ENCODE measurements at regions of chr1 and their contacts with region 1.

Region 1: GRCh38 chr1:162878000-162878596 is 17.1 kb upstream of the CCDC190 start:
- DNase-seq: peak; percentile 31 to 87
- H3K4me3 ChIP-seq: no peak overlapping the region
- H3K27ac ChIP-seq: no peak overlapping the region
- H3K4me1 ChIP-seq: peaks cover 0 to 3% (median 0%) of the 10 kb centered on the region in 4 experiments; a peak in 2 of 7 replicates
- H3K27me3 ChIP-seq: no peaks in the 10 kb centered on the region
- CTCF ChIP-seq: peak; percentile 45 to 92 (median 86)
- EP300 ChIP-seq: no peak
- POLR2A ChIP-seq: no peak
- RAD21 ChIP-seq: peak; percentile 99

Region 2: GRCh38 chr1:162756523-162756922 is 121.6 kb before region 1 on chr1:
- CTCF ChIA-PET with region 1: no interaction called
- POLR2A ChIA-PET with region 1: no interaction called
- DNase-seq: no peak
- H3K4me3 ChIP-seq: no peak overlapping the region
- H3K27ac ChIP-seq: no peak overlapping the region
- H3K4me1 ChIP-seq: no peaks in the 10 kb centered on the region
- H3K27me3 ChIP-seq: no peaks in the 10 kb centered on the region
- CTCF ChIP-seq: peak in 1 of 3 experiments; percentile 34; a peak in 1 of 4 replicates
- EP300 ChIP-seq: no peak
- POLR2A ChIP-seq: no peak
- RAD21 ChIP-seq: peak; percentile 14 to 28; a peak in 3 of 4 replicates

Region 3: DNA sequence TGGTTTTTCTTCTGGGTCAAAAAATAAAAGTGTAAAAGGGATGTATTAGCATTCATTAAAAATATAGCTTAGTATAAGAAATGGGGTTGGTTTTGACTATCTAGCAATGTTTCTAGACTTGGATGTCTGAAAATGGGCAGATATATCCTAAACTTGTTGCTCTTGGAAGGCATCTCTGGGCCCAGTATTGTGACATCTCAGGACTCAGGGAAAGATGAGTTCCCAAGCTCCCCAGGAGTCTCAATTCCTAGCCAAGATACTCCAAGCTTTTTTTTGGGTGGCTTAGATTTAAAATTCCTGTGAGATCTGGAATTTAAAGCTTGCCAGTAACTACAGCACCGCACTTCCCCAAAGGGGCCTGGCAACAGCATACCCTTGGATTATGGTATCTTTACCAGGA is 99.1 kb before region 1 on chr1:
- CTCF ChIA-PET with region 1: no interaction called
- POLR2A ChIA-PET with region 1: no interaction called
- DNase-seq: no peak
- H3K4me3 ChIP-seq: no peak overlapping the region
- H3K27ac ChIP-seq: no peak overlapping the region
- H3K4me1 ChIP-seq: 0 out of 7 replicates have a peak, but pooled peaks cover 0 to 2% (median 0%) of the 10 kb centered on the region in 4 experiments
- H3K27me3 ChIP-seq: peaks cover 0 to 2% (median 0%) of the 10 kb centered on the region in 4 experiments; a peak in 1 of 7 replicates
- CTCF ChIP-seq: no peak
- EP300 ChIP-seq: no peak
- POLR2A ChIP-seq: no peak
- RAD21 ChIP-seq: no peak

Region 4: GRCh38 chr1:162854245-162854882 is 23.7 kb before region 1 on chr1:
- CTCF ChIA-PET with region 1: interaction called, 14 read pairs
- POLR2A ChIA-PET with region 1: no interaction called
- DNase-seq: no peak
- H3K4me3 ChIP-seq: no peak overlapping the region
- H3K27ac ChIP-seq: no peak overlapping the region
- H3K4me1 ChIP-seq: no peaks in the 10 kb centered on the region
- H3K27me3 ChIP-seq: no peaks in the 10 kb centered on the region
- CTCF ChIP-seq: peak in 2 of 3 experiments; percentile 52 to 69; a peak in 3 of 4 replicates
- EP300 ChIP-seq: no peak
- POLR2A ChIP-seq: no peak
- RAD21 ChIP-seq: peak; percentile 67 to 68

Region 5: GRCh38 chr1:162861101-162861500 is 17.0 kb before region 1 on chr1 and contains the start of gene CCDC190:
- CTCF ChIA-PET with region 1: interaction called, 10 read pairs
- POLR2A ChIA-PET with region 1: no interaction called
- DNase-seq: no peak
- H3K4me3 ChIP-seq: no peak within 1 kb of the TSS
- H3K27ac ChIP-seq: no peak within 1 kb of the TSS
- H3K4me1 ChIP-seq: no peaks in the 10 kb centered on the region
- H3K27me3 ChIP-seq: no peaks in the 10 kb centered on the region
- CTCF ChIP-seq: no peak
- EP300 ChIP-seq: no peak
- POLR2A ChIP-seq: no peak
- RAD21 ChIP-seq: no peak
- total RNA-seq, gene CCDC190: not detected in 2 replicates

Region 6: GRCh38 chr1:162892906-162893611 is 15.0 kb after region 1 on chr1:
- CTCF ChIA-PET with region 1: interaction called, 17 read pairs
- POLR2A ChIA-PET with region 1: no interaction called
- DNase-seq: no peak
- H3K4me3 ChIP-seq: no peak overlapping the region
- H3K27ac ChIP-seq: no peak overlapping the region
- H3K4me1 ChIP-seq: peaks cover 0 to 4% (median 2%) of the 10 kb centered on the region in 4 experiments; a peak in 1 of 7 replicates
- H3K27me3 ChIP-seq: no peaks in the 10 kb centered on the region
- CTCF ChIP-seq: no peak
- EP300 ChIP-seq: no peak
- POLR2A ChIP-seq: no peak
- RAD21 ChIP-seq: no peak

Region 7: GRCh38 chr1:163174524-163175437 is 296.7 kb after region 1 on chr1:
- CTCF ChIA-PET with region 1: interaction called, 17 read pairs
- POLR2A ChIA-PET with region 1: no interaction called
- DNase-seq: peak; percentile 19 to 77
- H3K4me3 ChIP-seq: no peak overlapping the region
- H3K27ac ChIP-seq: no peak overlapping the region
- H3K4me1 ChIP-seq: no peaks in the 10 kb centered on the region; a peak in 1 of 7 replicates
- H3K27me3 ChIP-seq: no peaks in the 10 kb centered on the region
- CTCF ChIP-seq: peak; percentile 64 to 78 (median 72)
- EP300 ChIP-seq: no peak
- POLR2A ChIP-seq: no peak
- RAD21 ChIP-seq: peak; percentile 74 to 76

Region 8: GRCh38 chr1:163442920-163443319 is 564.8 kb after region 1 on chr1:
- CTCF ChIA-PET with region 1: no interaction called
- POLR2A ChIA-PET with region 1: no interaction called
- DNase-seq: no peak
- H3K4me3 ChIP-seq: no peak overlapping the region
- H3K27ac ChIP-seq: no peak overlapping the region
- H3K4me1 ChIP-seq: peaks cover 0 to 6% (median 3%) of the 10 kb centered on the region in 4 experiments; a peak in 3 of 7 replicates
- H3K27me3 ChIP-seq: no peaks in the 10 kb centered on the region
- CTCF ChIP-seq: no peak
- EP300 ChIP-seq: no peak
- POLR2A ChIP-seq: no peak
- RAD21 ChIP-seq: no peak

Measured in H1 (cell line).